ENCODE measurements at regions of chr3 and their contacts with region 1.

Region 1: GRCh38 chr3:187359798-187360486 is 8.2 kb upstream of the RTP4 start:
- DNase-seq: no peak
- H3K4me3 ChIP-seq: no peak overlapping the region
- H3K27ac ChIP-seq: no peak overlapping the region
- H3K4me1 ChIP-seq: peaks cover 0 to 10% (median 6%) of the 10 kb centered on the region in 6 donors
- H3K27me3 ChIP-seq: no peaks in the 10 kb centered on the region
- CTCF ChIP-seq: no peak
- POLR2A ChIP-seq: no peak

Region 2: DNA sequence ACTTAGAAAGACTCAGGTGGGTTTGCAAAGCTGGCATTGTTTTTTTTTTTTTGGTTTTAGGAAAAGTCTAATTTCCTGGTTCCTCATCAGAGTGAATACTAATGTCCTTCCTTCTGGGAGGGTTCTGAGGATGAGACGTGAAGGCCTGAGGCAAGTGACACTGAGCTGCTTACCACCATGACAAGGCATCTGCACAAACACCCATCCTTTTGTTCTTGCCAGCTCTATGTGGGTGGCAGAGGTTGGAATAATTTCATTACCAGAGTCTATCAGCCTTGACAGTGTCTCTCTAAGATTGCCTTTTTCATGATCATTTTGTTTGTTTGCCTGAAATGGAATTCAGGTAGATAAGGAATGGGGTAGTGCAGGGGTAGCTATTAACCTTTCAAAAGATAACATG is 25.4 kb after region 1 on chr3:
- intact Hi-C with region 1: loop called (anchors 5 kb)
- DNase-seq: no peak
- H3K4me3 ChIP-seq: no peak overlapping the region
- H3K27ac ChIP-seq: no peak overlapping the region
- H3K4me1 ChIP-seq: no peaks in the 10 kb centered on the region
- H3K27me3 ChIP-seq: no peaks in the 10 kb centered on the region
- CTCF ChIP-seq: no peak
- POLR2A ChIP-seq: no peak

Measured in spleen (tissue), 13 donors.